ENCODE measurements at regions of chr14 and their contacts with region 1.

Region 1: DNA sequence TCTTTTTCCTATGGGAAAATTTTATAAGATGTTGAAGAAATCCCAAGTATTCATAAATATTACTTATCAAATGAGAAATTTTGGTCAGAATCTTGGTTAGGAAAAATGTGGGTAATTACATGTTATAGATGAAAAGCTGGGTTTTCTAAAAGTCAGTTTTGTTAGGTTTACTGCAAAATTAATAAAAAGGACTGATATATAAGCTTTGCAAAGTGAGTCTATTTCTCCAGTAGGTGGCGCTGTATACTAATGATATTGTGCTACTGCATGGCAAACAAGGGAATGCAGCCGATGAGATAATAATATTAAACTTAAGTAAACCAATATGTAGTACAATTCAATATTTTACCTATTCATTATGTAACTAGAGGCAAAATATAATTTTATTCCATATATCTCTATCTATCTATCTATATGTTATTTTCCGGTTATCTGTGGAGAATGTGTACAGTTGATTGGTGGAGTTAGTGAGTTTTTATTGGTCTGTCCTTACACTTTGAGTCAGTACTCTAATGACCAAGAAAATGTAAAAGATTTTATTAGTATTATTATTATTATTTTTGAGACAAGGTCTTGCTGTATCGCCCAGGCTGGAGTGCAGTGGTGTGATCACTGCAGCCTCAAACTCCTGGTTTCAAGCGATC is 32.9 kb downstream of the MIPOL1 start:
- DNase-seq: peak; percentile 90
- ATAC-seq: peak; percentile 83
- H3K4me3 ChIP-seq: no peak overlapping the region
- H3K27ac ChIP-seq: no peak overlapping the region
- H3K4me1 ChIP-seq: peaks cover 8% of the 10 kb centered on the region
- H3K27me3 ChIP-seq: no peaks in the 10 kb centered on the region
- CTCF ChIP-seq: peak; percentile 83
- EP300 ChIP-seq: no peak
- POLR2A ChIP-seq: no peak
- RAD21 ChIP-seq: peak; percentile 66

Region 2: GRCh38 chr14:37150414-37150813 is 80.3 kb before region 1 on chr14:
- CTCF ChIA-PET with region 1: interaction called, 5 read pairs
- POLR2A ChIA-PET with region 1: no interaction called
- in situ Hi-C with region 1: no loop called
- intact Hi-C with region 1: loop called (anchors 1 kb)
- DNase-seq: peak; percentile 63
- ATAC-seq: peak; percentile 75
- H3K4me3 ChIP-seq: no peak overlapping the region
- H3K27ac ChIP-seq: no peak overlapping the region
- H3K4me1 ChIP-seq: no peaks in the 10 kb centered on the region
- H3K27me3 ChIP-seq: no peaks in the 10 kb centered on the region
- CTCF ChIP-seq: peak; percentile 78
- EP300 ChIP-seq: no peak
- POLR2A ChIP-seq: no peak
- RAD21 ChIP-seq: no peak

Region 3: GRCh38 chr14:37197421-37198272 is 33.0 kb before region 1 on chr14 and contains the start of gene MIPOL1:
- CTCF ChIA-PET with region 1: no interaction called
- POLR2A ChIA-PET with region 1: interaction called, 13 read pairs
- in situ Hi-C with region 1: no loop called
- intact Hi-C with region 1: loop called (anchors 2 kb)
- DNase-seq: peak; percentile 79
- ATAC-seq: peak; percentile 97
- H3K4me3 ChIP-seq: peak within 1 kb of the TSS; percentile 62 to 85 (median 73)
- H3K27ac ChIP-seq: peak within 1 kb of the TSS; percentile 71
- H3K4me1 ChIP-seq: peaks cover 69% of the 10 kb centered on the region
- H3K27me3 ChIP-seq: no peaks in the 10 kb centered on the region; a peak in 1 of 5 replicates
- CTCF ChIP-seq: peak; percentile 77
- EP300 ChIP-seq: peak in 1 of 2 experiments; percentile 56; a peak in 1 of 4 replicates
- POLR2A ChIP-seq: peak; percentile 83 to 92
- RAD21 ChIP-seq: peak; percentile 68
- total RNA-seq, gene MIPOL1: 34.2 and 35.2 TPM in 2 replicates

Region 4: DNA sequence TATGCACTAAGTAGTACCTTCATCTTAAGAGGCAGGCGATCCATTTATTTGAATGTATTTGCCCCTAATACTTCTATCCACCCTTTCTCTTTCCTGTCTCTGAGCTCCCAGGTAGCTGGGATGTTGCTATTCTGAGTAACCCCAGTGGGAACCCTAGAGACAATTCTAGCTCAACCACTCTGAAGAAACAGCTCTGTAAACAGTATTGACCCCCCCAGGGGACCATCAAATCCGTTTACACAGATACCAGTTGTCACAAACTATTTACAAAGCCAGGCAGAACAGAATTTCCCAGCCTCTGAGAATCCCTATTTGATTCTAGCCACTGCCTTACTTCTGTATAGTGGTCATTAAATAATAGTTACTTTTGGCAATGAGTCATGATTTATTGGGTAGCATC is 32.0 kb after region 1 on chr14:
- CTCF ChIA-PET with region 1: no interaction called
- POLR2A ChIA-PET with region 1: no interaction called
- in situ Hi-C with region 1: no loop called
- intact Hi-C with region 1: no loop called
- DNase-seq: peak; percentile 34
- ATAC-seq: peak; percentile 66
- H3K4me3 ChIP-seq: no peak overlapping the region
- H3K27ac ChIP-seq: no peak overlapping the region
- H3K4me1 ChIP-seq: peaks cover 5% of the 10 kb centered on the region; the same call in 1 of the 2 replicates
- H3K27me3 ChIP-seq: no peaks in the 10 kb centered on the region
- CTCF ChIP-seq: no peak
- EP300 ChIP-seq: no peak
- POLR2A ChIP-seq: no peak
- RAD21 ChIP-seq: no peak

Region 5: GRCh38 chr14:37889087-37889486 is 658.4 kb after region 1 on chr14:
- CTCF ChIA-PET with region 1: no interaction called
- POLR2A ChIA-PET with region 1: no interaction called
- in situ Hi-C with region 1: no loop called
- intact Hi-C with region 1: loop called (anchors 5 kb)
- DNase-seq: peak; percentile 56
- ATAC-seq: peak; percentile 46
- H3K4me3 ChIP-seq: no peak overlapping the region
- H3K27ac ChIP-seq: no peak overlapping the region
- H3K4me1 ChIP-seq: peaks cover 17% of the 10 kb centered on the region
- H3K27me3 ChIP-seq: no peaks in the 10 kb centered on the region
- CTCF ChIP-seq: no peak
- EP300 ChIP-seq: no peak
- POLR2A ChIP-seq: no peak
- RAD21 ChIP-seq: no peak

Measured in HepG2 (cell line).